HEK293T (cell line): ENCODE measurements at regions of chr3 and their contacts with region 1.

Region 1: GRCh38 chr3:98817547-98818041 is 54.5 kb downstream of the ST3GAL6 start:
- DNase-seq: peak; percentile 36

Region 2: GRCh38 chr3:98602078-98602678 is 215.4 kb before region 1 on chr3:
- CTCF ChIA-PET with region 1: interaction called, 41 read pairs
- POLR2A ChIA-PET with region 1: no interaction called
- DNase-seq: peak; percentile 57

Region 3: DNA sequence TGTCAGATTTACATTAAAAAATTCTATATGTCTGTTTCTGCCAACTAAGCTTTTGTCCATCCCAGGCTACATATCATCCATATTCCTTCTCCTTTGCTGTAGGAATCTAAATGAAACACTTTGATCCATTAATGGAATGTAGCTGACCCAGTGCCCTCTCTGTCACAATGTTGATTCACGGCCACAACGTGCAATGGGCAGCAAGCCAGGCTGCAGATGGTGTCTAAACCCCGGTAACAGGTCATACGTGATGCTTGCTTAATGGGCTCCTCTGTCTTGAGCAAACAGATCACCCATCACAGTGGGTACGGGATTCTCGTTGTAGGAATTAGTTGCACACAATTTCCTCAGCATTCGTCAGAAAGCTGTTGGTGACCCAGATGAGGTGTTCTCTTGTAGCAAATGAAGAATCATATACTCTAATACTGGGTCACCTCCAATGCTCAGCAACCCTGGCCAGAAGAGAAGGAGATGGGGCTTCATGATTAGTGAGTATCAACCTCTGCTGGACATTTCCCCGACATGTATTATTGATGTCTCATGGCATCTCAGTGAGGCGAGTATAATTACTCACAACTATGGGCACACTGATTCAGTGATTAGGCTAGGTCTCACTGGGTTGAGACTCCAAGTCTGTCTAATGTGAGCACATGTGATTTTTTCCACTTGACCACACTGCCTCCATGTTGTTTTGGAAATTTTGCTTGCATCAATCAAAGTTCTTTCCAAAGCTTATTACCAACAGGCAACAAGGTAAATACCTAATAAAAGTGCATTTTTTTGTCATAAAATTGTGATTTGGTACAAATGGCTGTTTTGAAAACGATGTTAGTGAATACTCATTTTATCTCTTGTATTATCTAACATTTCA is 96.9 kb after region 1 on chr3:
- CTCF ChIA-PET with region 1: no interaction called
- POLR2A ChIA-PET with region 1: no interaction called
- DNase-seq: no peak

Region 4: DNA sequence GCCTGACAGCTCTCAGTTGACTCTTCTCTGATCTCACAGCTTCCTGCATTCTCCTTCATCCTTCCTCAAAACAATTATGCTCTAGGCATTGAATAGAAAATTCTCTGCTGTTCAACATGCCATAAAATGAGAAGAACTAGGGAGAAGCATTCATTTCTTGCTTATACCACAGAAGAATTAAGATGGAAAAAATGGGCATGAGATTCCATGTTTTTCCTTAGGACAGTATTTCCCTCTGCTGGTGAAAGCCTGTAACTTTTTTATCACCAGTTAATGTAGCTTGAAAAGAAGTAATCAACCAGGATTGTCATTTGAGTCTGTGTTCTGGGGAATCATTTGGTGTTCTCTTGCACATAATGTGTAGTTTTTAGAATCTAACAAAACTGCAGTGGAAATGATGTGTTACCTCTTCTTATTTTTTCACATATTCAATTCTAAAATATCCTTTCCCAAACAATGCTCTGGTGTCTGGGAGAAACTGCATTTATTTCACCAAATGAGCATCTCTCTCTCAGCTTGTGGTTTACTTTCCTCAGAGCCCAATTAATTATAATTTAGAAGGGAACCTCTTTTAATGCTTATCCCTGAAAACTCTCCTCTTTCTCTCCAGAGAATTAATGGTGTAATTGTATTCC is 176.7 kb after region 1 on chr3:
- CTCF ChIA-PET with region 1: interaction called, 36 read pairs
- POLR2A ChIA-PET with region 1: no interaction called
- DNase-seq: peak; percentile 17